ENCODE measurements at regions of chr4 and their contacts with region 1.

Region 1: DNA sequence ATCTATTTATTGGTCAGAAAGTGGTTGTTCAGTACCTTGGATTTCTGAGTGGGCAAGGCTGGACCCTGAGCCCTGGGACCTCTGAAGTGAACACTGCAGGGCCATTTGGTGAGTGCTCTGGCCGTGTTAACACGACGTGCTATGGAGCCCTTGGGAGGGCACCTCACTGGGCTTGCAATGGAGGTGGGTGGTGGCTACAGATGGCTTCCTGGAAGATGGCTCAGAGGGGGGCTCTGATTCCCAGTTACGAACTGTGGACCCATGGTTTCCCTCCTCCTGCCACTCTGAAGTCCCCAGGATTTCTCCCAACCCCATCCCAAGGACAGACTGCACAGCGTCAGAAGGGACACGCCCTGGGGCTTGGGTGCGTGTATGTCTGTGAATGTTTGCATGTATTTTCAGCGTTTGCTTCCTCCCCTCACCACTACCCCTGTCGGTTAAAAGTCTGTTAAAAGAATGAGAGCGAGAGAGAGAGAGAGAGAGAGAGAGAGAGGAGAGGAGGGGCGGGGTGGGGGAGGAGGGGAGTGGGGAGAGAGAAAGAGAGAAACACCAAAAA is 3.7 kb upstream of the RHOH start:
- DNase-seq: peak; percentile 62
- ATAC-seq: peak; percentile 18
- H3K4me3 Mint-ChIP-seq: peak overlapping the region; percentile 98
- H3K27ac Mint-ChIP-seq: peak overlapping the region; percentile 99
- H3K4me1 Mint-ChIP-seq: peaks cover 62% of the 10 kb centered on the region
- H3K27me3 Mint-ChIP-seq: no peaks in the 10 kb centered on the region

Region 2: GRCh38 chr4:40205259-40206198 is 12.4 kb after region 1 on chr4:
- CTCF ChIA-PET with region 1: interaction called, 17 read pairs
- DNase-seq: peak; percentile 80
- ATAC-seq: peak; percentile 50
- H3K4me3 Mint-ChIP-seq: peak overlapping the region; percentile 98
- H3K27ac Mint-ChIP-seq: peak overlapping the region; percentile 99
- H3K4me1 Mint-ChIP-seq: peaks cover 62% of the 10 kb centered on the region
- H3K27me3 Mint-ChIP-seq: no peaks in the 10 kb centered on the region